ENCODE measurements at regions of chr14 and their contacts with region 1.

Region 1: GRCh38 chr14:102316743-102317563 is 2.6 kb upstream of the ZNF839 start:
- DNase-seq: peak; percentile 98
- H3K4me3 Mint-ChIP-seq: peak overlapping the region; percentile 87
- H3K27ac Mint-ChIP-seq: peak overlapping the region; percentile 87
- H3K4me1 Mint-ChIP-seq: peaks cover 54% of the 10 kb centered on the region
- H3K27me3 Mint-ChIP-seq: no peaks in the 10 kb centered on the region

Region 2: DNA sequence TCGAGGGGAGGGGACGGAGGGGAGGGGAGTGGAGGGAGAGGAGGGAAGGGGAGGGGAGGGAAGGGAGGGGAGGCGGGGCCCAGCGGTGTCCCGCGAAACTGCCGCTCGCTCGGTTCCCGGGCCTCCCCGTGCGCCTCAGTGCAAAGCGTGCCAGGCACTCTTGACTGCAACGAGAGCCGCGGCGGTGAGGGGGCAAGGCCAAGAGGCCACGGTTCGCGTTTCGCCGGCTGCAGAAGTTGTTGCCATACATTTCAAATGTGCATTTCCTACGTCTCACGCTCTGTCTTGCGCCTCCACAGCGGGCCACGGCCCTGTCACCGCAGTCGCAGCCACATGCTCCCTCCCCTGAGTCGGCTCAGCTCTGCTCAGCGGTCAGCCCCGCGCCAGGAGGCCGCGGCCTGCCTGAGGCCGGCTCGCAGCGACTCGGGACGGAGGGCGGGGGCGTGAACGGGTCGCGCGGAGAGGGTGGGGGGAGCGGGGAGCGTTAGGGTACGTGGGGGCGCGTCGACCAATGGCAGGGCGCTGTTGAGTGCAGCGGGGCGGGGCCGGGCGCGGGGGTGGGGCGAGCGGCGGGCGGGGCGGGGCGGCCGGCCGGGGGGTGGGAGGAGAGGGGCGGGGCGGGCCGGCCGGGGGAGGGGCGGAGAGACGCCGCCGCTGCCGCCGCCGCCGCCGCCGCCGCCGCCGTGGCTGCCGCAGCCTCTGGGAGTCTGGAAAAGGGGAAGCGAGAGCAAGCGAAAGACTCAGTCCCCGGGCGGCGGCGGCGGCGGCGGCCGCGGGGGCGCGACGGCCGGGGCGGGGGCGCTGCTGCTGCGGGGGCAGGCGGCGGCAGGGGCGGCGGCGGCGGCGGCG is 555.7 kb before region 1 on chr14 and contains the start of gene PPP2R5C:
- CTCF ChIA-PET with region 1: no interaction called
- POLR2A ChIA-PET with region 1: no interaction called
- intact Hi-C with region 1: loop called (anchors 5 kb)
- DNase-seq: peak; percentile 91
- H3K4me3 Mint-ChIP-seq: peak within 1 kb of the TSS; percentile 87
- H3K27ac Mint-ChIP-seq: peak within 1 kb of the TSS; percentile 75
- H3K4me1 Mint-ChIP-seq: peaks cover 46% of the 10 kb centered on the region
- H3K27me3 Mint-ChIP-seq: no peaks in the 10 kb centered on the region
- total RNA-seq, gene PPP2R5C: 252 to 268 TPM

Region 3: GRCh38 chr14:102063091-102063802 is 253.7 kb before region 1 on chr14:
- CTCF ChIA-PET with region 1: interaction called, 13 read pairs
- POLR2A ChIA-PET with region 1: no interaction called
- intact Hi-C with region 1: loop called (anchors 1 kb)
- DNase-seq: peak; percentile 79
- H3K4me3 Mint-ChIP-seq: no peak overlapping the region
- H3K27ac Mint-ChIP-seq: no peak overlapping the region
- H3K4me1 Mint-ChIP-seq: peaks cover under 1% of the 10 kb centered on the region
- H3K27me3 Mint-ChIP-seq: no peaks in the 10 kb centered on the region

Region 4: DNA sequence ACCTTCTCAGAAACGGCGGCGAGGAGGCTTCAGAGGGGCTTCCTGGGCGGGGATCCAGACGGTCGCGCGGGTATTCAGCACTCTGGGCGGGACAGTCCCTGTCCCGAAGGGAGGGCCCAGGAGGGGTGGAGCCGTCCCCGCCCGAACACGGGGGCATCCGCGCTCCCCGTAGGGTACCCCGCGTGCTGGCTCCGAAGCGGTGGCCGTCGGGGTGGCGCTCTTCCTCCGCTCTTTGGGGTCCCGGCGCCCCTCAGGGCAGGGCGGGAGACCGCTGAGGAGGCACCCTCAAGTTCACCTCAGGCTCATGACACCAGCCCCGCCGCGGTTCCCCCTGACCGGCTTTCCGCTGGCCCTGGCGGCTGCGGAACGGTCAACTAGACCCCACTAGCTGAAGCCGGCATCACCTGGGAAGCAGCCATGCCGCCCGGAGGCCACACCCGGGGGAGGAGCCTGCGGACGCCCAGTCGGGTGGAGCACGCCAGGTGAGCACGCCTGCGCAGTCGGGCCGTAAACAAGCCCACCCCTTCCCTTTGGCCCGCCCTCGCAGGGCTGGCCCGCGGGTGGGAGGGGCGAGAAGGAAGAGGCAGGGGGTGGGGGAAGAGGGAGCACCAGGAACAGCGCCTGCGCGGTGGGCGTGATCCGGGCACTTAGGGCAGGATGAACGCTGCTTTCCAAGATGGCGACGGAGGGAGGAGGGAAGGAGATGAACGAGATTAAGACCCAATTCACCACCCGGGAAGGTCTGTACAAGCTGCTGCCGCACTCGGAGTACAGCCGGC is 177.5 kb before region 1 on chr14 and contains the start of gene WDR20:
- CTCF ChIA-PET with region 1: interaction called, 3 read pairs
- POLR2A ChIA-PET with region 1: no interaction called
- intact Hi-C with region 1: loop called (anchors 2 kb)
- DNase-seq: peak; percentile 100
- H3K4me3 Mint-ChIP-seq: peak within 1 kb of the TSS; percentile 98
- H3K27ac Mint-ChIP-seq: peak within 1 kb of the TSS; percentile 94
- H3K4me1 Mint-ChIP-seq: peaks cover 20% of the 10 kb centered on the region
- H3K27me3 Mint-ChIP-seq: no peaks in the 10 kb centered on the region
- total RNA-seq, gene WDR20: 22.2 to 25.3 TPM

Region 5: DNA sequence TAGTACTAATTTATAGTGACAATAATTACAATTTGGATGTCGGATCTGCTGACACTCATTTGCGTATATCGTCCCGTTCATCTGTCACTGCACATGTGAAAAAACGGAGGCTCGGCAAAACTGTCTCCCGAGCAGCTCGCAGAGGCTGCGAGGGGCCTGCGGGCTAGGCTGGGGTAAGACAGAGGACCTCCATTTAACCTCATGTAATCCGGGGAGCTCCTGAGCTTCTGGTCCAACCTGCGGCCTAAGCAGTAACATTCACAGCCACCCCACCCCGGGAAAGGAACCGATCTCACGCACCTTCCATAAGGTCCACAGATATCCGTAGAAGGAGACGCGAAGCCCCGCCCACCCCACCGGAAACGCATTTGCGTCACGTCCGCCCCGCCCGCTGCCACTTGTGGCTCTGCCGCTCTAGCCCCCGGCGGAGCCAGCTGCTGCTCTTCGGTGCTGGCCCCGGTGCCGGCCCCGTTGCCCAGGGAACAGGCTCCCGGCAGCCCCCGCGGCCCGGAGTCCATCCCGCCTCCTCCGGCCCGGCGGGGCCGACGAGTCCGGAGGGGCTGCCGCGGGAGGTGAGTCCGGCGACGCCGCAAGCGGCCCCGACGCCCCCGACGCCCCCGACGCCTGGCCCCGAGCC is 45.7 kb after region 1 on chr14 and contains the starts of genes CINP and TECPR2:
- CTCF ChIA-PET with region 1: interaction called, 8 read pairs
- POLR2A ChIA-PET with region 1: interaction called, 16 read pairs
- intact Hi-C with region 1: loop called (anchors 1 kb)
- DNase-seq: peak; percentile 99
- H3K4me3 Mint-ChIP-seq: no peak within 1 kb of the TSS
- H3K27ac Mint-ChIP-seq: peak within 1 kb of the TSS; percentile 96
- H3K4me1 Mint-ChIP-seq: peaks cover 31% of the 10 kb centered on the region
- H3K27me3 Mint-ChIP-seq: no peaks in the 10 kb centered on the region
- total RNA-seq, gene CINP: 50.5 to 51.2 TPM
- total RNA-seq, gene TECPR2: 6.2 to 7.0 TPM

Region 6: GRCh38 chr14:102555264-102555831 is 238.4 kb after region 1 on chr14:
- CTCF ChIA-PET with region 1: no interaction called
- POLR2A ChIA-PET with region 1: no interaction called
- intact Hi-C with region 1: no loop called
- DNase-seq: peak; percentile 63
- H3K4me3 Mint-ChIP-seq: peak overlapping the region; percentile 66
- H3K27ac Mint-ChIP-seq: no peak overlapping the region
- H3K4me1 Mint-ChIP-seq: peaks cover 9% of the 10 kb centered on the region
- H3K27me3 Mint-ChIP-seq: no peaks in the 10 kb centered on the region

Region 7: DNA sequence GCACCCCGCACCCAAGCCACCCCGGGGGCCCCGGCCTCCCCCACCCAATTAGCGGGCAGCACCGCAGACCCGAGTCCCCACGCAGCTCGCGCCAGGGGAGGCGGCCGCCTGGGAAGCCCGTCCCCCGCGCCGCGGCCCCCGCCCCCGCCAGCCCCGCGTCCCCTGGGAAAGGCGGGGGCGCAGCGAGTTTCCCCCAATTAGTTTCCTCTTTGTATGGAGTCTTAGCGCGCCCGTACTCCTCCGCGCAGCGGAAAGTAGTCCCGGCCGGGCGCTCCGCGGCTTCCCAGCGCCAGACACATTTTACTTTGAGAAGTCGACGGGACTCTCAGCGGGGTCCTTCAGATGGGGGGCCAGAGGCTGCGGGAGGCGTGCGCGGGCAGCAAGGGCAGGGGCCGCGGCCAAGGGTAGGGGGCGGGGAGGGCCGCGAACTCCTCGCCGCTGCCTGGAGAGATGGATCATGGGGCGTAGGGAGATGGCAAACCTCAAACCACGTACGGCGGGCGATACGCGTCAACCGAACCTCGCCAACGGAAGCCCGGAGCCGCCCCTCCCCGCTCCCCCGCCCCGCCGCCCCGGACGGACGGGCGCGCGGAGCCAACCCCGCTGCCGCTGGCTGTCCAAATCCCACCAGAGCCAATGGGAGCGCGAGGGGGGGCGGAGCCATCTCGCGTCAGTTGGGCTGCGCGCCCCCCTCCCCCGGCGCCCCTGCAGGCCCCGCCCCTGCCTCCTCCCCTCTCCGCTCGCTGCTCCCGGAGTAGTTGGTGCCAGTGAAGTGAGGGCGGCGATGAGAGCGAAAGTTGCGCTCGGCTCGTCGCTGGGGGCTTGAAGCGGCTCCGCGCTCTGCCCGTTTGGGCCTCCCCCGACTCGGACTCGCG is 275.2 kb after region 1 on chr14 and contains the start of gene RCOR1:
- CTCF ChIA-PET with region 1: no interaction called
- POLR2A ChIA-PET with region 1: no interaction called
- intact Hi-C with region 1: loop called (anchors 5 kb)
- DNase-seq: peak; percentile 99
- H3K4me3 Mint-ChIP-seq: peak within 1 kb of the TSS; percentile 84
- H3K27ac Mint-ChIP-seq: peak within 1 kb of the TSS; percentile 93
- H3K4me1 Mint-ChIP-seq: peaks cover 32% of the 10 kb centered on the region
- H3K27me3 Mint-ChIP-seq: no peaks in the 10 kb centered on the region
- total RNA-seq, gene RCOR1: 14.1 to 14.3 TPM